ENCODE measurements at regions of chr3 and their contacts with region 1.

Region 1: DNA sequence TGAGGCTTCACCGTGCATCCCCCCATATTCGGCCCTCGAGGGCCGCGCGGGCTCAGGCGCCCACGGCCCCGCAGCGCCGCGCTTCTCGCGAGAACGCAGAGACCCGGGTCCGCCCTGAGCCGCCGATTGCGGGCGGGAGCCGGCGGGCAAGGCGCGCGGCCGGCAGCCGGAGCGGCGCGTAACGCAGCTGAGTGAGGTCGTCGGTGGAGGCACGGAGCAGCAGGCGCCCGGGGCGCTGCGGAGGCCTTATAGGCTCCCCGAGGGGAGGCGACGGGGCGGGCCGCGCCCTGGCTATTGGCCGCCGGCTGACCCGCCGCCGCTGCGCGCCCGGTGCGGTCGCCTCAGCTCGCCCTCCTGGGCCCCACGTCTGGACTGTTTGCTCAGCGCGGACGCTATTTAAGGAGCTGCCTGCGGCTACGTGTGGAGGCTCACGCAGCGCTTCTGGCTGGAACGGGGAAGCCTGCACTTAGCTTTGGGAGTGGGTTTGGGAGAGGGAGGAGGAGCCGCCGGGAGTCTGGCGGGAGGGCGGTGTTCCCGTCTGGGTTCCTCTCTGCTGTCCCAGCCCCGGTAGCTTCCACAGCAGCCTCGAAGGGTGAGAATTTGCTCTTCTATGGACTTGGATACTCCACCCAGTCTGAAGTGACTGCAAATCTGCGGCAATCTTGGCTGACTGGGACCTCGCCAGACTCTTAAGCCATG is at the start of gene PLOD2:
- DNase-seq: peak; percentile 16 to 91
- H3K4me3 ChIP-seq: peak within 1 kb of the TSS; percentile 67 to 93
- H3K27ac ChIP-seq: peak within 1 kb of the TSS; percentile 98 to 99
- H3K4me1 ChIP-seq: peaks cover 0 to 31% of the 10 kb centered on the region in 2 donors
- H3K27me3 ChIP-seq: no peaks in the 10 kb centered on the region
- CTCF ChIP-seq: no peak
- total RNA-seq, gene PLOD2: 41.3 TPM

Region 2: GRCh38 chr3:146065573-146066006 is 95.5 kb before region 1 on chr3:
- intact Hi-C with region 1: loop called (anchors 2 kb)
- DNase-seq: no peak
- H3K4me3 ChIP-seq: no peak overlapping the region
- H3K27ac ChIP-seq: no peak overlapping the region
- H3K4me1 ChIP-seq: no peaks in the 10 kb centered on the region
- H3K27me3 ChIP-seq: no peaks in the 10 kb centered on the region
- CTCF ChIP-seq: peak; percentile 43 to 73 (median 60)

Region 3: DNA sequence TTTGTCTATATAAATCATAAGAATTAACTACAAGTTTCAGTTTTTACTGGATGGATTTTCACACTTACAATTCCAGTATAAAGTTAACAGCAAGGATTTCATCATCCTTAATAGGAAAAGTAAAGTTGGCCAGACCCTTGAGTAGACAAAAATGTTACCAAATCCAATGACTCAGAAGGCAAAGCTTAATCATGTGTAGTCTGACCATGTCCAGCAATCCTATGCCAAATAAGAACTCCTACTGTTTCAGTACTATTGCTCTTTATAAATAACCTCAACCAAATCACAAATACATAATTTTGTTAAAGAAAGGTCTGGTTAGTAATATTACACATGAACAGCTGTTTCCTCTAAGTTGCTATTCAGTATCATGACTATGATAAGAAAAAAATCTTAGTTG is 35.2 kb before region 1 on chr3:
- intact Hi-C with region 1: loop called (anchors 2 kb)
- DNase-seq: no peak
- H3K4me3 ChIP-seq: peak overlapping the region in 1 of 2 donors; percentile 41
- H3K27ac ChIP-seq: peak overlapping the region; percentile 89 to 91
- H3K4me1 ChIP-seq: peaks cover 0 to 30% of the 10 kb centered on the region in 2 donors
- H3K27me3 ChIP-seq: no peaks in the 10 kb centered on the region
- CTCF ChIP-seq: no peak

Region 4: GRCh38 chr3:146250449-146251382 is 89.6 kb after region 1 on chr3 and contains the start of gene PLSCR4:
- intact Hi-C with region 1: loop called (anchors 5 kb)
- DNase-seq: peak in 1 of 2 donors; percentile 89
- H3K4me3 ChIP-seq: peak within 1 kb of the TSS; percentile 89 to 97
- H3K27ac ChIP-seq: peak within 1 kb of the TSS; percentile 96 to 100
- H3K4me1 ChIP-seq: peaks cover 0 to 5% of the 10 kb centered on the region in 2 donors
- H3K27me3 ChIP-seq: no peaks in the 10 kb centered on the region
- CTCF ChIP-seq: no peak
- total RNA-seq, gene PLSCR4: 87.2 TPM

Region 5: DNA sequence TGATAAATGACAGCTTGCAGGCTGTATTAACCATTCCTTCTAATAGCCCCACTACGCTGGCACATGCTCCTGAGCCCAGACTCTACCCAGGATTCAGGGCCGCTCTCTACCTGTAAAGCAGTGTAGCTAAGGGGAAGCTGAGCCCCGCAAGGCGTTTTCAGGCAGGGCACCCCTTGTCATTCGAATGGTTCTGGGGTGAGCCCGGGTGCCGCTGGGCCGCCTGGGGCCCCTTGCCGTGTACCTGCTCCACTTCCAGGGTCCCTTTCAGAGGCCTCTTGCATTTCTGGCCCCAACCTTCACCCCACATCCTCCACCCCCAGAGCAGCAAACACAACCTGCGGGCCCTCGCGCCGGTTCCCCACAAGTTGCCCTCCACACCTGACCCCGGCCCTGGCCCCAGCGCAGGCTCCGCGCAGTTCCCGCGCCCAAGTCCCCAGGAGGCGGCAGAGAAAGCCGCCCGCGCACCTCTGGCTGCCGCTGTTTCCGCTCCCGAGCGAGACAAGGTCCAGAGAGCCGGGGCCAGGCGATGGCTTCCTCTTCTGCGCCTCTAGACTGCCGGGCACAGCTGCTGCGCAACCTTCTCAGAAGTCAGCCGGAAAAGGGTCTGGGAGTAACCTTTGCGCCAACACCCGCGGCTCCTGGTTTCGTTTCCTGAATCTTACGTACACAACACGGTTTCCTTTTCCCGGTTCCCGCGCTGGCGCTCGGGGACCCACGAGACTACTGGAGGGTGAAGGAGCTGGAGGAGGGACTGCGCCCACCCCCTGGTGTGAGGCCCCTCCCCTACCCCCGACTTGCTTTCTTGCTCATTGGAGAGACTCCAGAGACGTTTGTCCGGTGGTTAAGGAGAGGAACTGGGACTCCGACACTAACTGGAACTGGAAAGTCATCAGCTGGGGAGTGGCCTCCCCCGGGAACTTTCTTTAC is 383.2 kb after region 1 on chr3 and contains the start of gene PLSCR1:
- intact Hi-C with region 1: loop called (anchors 5 kb)
- DNase-seq: peak; percentile 91 to 98
- H3K4me3 ChIP-seq: peak within 1 kb of the TSS; percentile 80 to 92
- H3K27ac ChIP-seq: peak within 1 kb of the TSS; percentile 98
- H3K4me1 ChIP-seq: peaks cover 0 to 4% of the 10 kb centered on the region in 2 donors
- H3K27me3 ChIP-seq: no peaks in the 10 kb centered on the region
- CTCF ChIP-seq: peak in 1 of 3 experiments; percentile 4
- total RNA-seq, gene PLSCR1: 62.2 TPM

Region 6: GRCh38 chr3:146658841-146659240 is 497.7 kb after region 1 on chr3:
- intact Hi-C with region 1: no loop called
- DNase-seq: no peak
- H3K4me3 ChIP-seq: no peak overlapping the region
- H3K27ac ChIP-seq: no peak overlapping the region
- H3K4me1 ChIP-seq: no peaks in the 10 kb centered on the region
- H3K27me3 ChIP-seq: no peaks in the 10 kb centered on the region
- CTCF ChIP-seq: no peak

Region 7: DNA sequence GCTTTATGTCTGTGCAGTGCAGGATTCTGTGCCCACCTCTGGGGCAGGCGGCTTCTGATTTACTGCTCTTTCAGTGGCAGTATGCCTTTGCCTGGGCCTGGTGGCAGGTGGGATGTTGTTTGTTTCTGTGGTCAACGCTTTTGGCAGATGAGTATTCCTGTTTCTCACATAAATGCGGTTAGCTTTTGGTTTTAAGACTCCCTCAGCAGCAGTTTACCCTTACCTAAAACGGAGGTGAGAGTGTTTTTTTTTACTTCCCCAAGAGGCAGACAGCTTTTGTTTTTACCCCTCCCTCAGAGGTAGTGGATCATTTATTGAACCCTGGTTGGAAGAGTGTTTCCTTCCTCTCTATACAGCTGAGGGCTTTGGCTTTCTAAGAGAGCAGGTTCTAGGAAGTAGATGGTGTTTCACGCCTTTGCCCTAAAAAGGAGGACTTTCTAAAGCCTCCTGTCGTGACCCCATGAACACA is 578.1 kb after region 1 on chr3:
- intact Hi-C with region 1: no loop called
- DNase-seq: no peak
- H3K4me3 ChIP-seq: no peak overlapping the region
- H3K27ac ChIP-seq: no peak overlapping the region
- H3K4me1 ChIP-seq: no peaks in the 10 kb centered on the region
- H3K27me3 ChIP-seq: no peaks in the 10 kb centered on the region
- CTCF ChIP-seq: no peak

Measured in ascending aorta (tissue), 2 donors.